CD4-positive, alpha-beta T cell (primary cell): ENCODE measurements at regions of chr4 and their contacts with region 1.

Region 1: GRCh38 chr4:153466081-153466948 is at the start of gene TMEM131L:
- DNase-seq: peak in 13 of 14 experiments; percentile 52 to 93 (median 69)
- ATAC-seq: peak; percentile 72
- H3K4me3 ChIP-seq: peak within 1 kb of the TSS; percentile 98
- H3K4me3 Mint-ChIP-seq: peak within 1 kb of the TSS; percentile 99
- H3K27ac ChIP-seq: peak within 1 kb of the TSS; percentile 87 to 89
- H3K27ac Mint-ChIP-seq: peak within 1 kb of the TSS; percentile 95
- H3K4me1 ChIP-seq: peaks cover 26% of the 10 kb centered on the region
- H3K4me1 Mint-ChIP-seq: peaks cover 52% of the 10 kb centered on the region
- H3K27me3 ChIP-seq: no peaks in the 10 kb centered on the region
- H3K27me3 Mint-ChIP-seq: no peaks in the 10 kb centered on the region
- CTCF ChIP-seq: peak; percentile 19
- total RNA-seq, gene TMEM131L: 101 to 106 TPM

Region 2: GRCh38 chr4:153426207-153426885 is 40.0 kb before region 1 on chr4:
- CTCF ChIA-PET with region 1: interaction called, 33 read pairs
- POLR2A ChIA-PET with region 1: interaction called, 90 read pairs
- intact Hi-C with region 1: loop called in 1 of 2 experiments (anchors 2 kb)
- DNase-seq: peak in 5 of 14 experiments; percentile 10 to 74 (median 68)
- ATAC-seq: peak; percentile 73
- H3K4me3 ChIP-seq: no peak overlapping the region
- H3K4me3 Mint-ChIP-seq: peak overlapping the region; percentile 50
- H3K27ac ChIP-seq: peak overlapping the region; percentile 58 to 61
- H3K27ac Mint-ChIP-seq: peak overlapping the region; percentile 96
- H3K4me1 ChIP-seq: peaks cover 44% of the 10 kb centered on the region
- H3K4me1 Mint-ChIP-seq: peaks cover 57% of the 10 kb centered on the region
- H3K27me3 ChIP-seq: no peaks in the 10 kb centered on the region
- H3K27me3 Mint-ChIP-seq: no peaks in the 10 kb centered on the region
- CTCF ChIP-seq: no peak

Region 3: DNA sequence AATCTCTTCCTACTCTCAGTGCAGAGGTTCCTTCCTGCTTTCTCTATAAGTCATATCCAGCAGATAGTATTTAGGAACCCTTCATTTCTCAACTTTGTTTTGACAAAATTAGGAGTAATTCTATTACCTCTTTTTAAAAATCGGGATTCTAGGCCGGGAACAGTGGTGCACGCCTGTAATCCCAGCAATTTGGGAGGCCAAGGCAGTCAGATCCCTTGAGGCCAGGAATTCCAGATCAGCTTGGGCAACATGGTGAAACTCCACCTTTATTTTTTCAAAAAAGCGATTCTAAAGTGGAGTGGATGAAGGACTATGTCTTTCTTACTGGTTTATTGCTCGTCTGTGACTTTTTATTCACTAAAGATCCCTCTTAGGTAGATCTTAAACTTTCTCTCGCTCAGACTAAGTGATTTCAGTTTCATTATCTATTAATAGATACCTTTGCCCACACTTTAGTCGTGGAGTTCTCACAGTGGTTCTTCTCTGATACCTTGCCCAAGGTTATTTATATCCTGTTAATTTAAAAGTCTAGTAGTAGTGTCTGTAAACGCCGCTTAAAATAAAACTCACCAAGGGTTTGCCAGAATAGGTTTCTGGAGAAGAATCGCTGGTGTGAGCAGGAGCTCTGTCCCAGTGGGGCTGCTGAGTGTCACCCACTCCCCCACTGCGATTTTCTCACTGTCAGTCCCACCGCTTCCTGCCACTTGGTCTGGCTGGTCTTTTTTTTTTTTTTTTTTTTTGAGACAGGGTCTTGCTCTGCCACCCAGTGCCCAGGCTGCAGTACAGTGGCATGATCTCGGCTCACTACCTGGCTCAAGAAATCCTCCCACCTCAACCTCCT is 27.2 kb before region 1 on chr4:
- CTCF ChIA-PET with region 1: interaction called, 33 read pairs
- POLR2A ChIA-PET with region 1: interaction called, 90 read pairs
- intact Hi-C with region 1: loop called in 1 of 2 experiments (anchors 2 kb)
- DNase-seq: peak in 10 of 14 experiments; percentile 15 to 84 (median 40)
- ATAC-seq: peak; percentile 83
- H3K4me3 ChIP-seq: peak overlapping the region; percentile 55
- H3K4me3 Mint-ChIP-seq: peak overlapping the region; percentile 75
- H3K27ac ChIP-seq: peak overlapping the region; percentile 68 to 84
- H3K27ac Mint-ChIP-seq: peak overlapping the region; percentile 89
- H3K4me1 ChIP-seq: peaks cover 23% of the 10 kb centered on the region
- H3K4me1 Mint-ChIP-seq: peaks cover 50% of the 10 kb centered on the region
- H3K27me3 ChIP-seq: no peaks in the 10 kb centered on the region
- H3K27me3 Mint-ChIP-seq: no peaks in the 10 kb centered on the region
- CTCF ChIP-seq: no peak

Region 4: DNA sequence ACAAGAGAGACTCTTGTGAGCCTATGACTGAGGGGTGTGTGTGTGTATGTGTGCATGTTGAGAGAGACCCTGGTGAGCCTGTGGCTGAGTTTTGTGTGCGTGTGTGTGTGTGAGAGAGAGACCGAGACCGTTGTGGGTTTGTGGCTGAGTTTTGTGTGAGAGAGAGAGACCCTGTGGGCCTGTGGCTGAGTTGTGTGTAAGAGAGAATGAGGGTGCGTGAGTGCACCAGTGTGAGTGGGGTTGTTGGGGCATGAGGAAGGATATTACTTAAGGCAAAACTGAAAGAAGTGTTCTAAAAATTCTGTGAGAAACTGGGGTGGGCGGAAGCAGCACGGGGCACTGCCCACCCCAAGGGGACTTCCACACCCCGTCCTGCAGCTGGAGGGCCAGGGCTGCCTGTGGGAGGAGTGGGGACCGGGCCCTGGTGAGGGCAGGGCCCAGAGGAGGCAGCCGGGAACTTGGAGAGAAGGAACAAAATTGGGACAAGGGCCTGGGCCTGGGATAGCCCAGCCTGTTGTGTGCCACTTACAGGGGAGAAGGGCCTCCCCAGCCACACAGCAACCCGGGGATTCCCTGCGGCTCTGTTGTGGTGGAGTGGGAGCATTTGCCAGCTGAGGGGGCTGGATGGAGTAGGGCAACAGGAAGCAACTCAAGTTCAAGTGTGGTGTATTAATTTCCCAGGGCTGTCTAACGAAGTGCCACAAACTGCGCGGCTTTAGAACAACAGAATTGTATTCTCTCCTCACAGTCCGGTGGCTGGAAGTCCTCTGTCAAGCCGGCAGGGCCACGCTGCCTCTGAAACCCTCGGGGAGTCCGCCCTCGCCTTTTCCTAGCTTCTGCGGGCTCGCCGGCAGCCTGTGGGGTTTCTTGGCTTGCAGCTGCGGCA is 21.9 kb after region 1 on chr4:
- CTCF ChIA-PET with region 1: interaction called, 8 read pairs
- POLR2A ChIA-PET with region 1: interaction called, 434 read pairs
- intact Hi-C with region 1: loop called in 1 of 2 experiments (anchors 1 kb)
- DNase-seq: peak in 13 of 14 experiments; percentile 50 to 94 (median 67)
- ATAC-seq: peak; percentile 65
- H3K4me3 ChIP-seq: peak overlapping the region; percentile 57
- H3K4me3 Mint-ChIP-seq: peak overlapping the region; percentile 88
- H3K27ac ChIP-seq: peak overlapping the region; percentile 92 to 94
- H3K27ac Mint-ChIP-seq: peak overlapping the region; percentile 92
- H3K4me1 ChIP-seq: peaks cover 68% of the 10 kb centered on the region
- H3K4me1 Mint-ChIP-seq: peaks cover 82% of the 10 kb centered on the region
- H3K27me3 ChIP-seq: no peaks in the 10 kb centered on the region
- H3K27me3 Mint-ChIP-seq: no peaks in the 10 kb centered on the region
- CTCF ChIP-seq: no peak

Region 5: DNA sequence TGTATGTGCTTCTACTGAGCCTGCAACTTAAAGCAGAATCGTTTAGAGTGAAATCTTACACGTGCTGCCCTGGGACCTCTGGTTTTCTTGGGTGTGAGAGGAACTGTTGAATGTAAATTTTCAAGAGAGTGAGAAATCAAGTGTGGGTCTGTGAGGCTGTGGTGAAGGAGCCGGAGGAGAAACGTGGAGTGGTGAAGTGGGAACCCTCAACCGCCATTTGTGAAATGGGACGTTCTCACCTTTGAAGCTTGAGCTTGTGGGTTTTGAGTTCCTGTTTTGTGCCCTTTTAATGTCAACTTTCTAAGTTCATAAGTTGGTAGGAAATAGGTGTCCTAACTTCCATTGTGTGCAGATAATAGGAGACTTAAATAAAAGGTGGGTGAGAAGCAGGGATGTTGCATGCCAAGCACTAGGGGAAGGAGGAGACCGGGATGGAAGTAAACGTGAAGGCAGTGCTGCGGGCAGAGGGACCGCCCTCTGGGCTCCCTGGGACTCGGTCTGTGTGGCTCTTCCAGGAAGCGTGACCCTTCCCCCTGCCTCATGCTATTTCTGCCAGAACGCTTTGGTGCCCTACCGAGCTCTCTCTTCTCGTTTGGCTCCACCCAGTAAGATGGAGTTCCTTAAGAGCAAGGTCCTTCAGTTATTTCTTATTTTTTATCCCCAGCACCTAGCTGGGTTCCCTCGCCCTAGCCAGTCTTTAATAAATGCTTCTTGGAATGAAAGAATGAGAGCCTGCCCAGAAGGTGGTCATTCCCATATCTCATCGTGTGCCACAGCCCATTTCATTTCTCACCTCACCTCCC is 55.9 kb after region 1 on chr4:
- CTCF ChIA-PET with region 1: interaction called, 8 read pairs
- POLR2A ChIA-PET with region 1: interaction called, 41 read pairs
- intact Hi-C with region 1: loop called (anchors 2 to 5 kb)
- DNase-seq: peak in 13 of 14 experiments; percentile 33 to 85 (median 55)
- ATAC-seq: peak; percentile 56
- H3K4me3 ChIP-seq: peak overlapping the region; percentile 28
- H3K4me3 Mint-ChIP-seq: peak overlapping the region; percentile 85
- H3K27ac ChIP-seq: peak overlapping the region; percentile 66 to 81
- H3K27ac Mint-ChIP-seq: peak overlapping the region; percentile 91
- H3K4me1 ChIP-seq: peaks cover 93% of the 10 kb centered on the region
- H3K4me1 Mint-ChIP-seq: peaks cover 94% of the 10 kb centered on the region
- H3K27me3 ChIP-seq: no peaks in the 10 kb centered on the region
- H3K27me3 Mint-ChIP-seq: no peaks in the 10 kb centered on the region
- CTCF ChIP-seq: no peak

Region 6: GRCh38 chr4:153535772-153536513 is 69.6 kb after region 1 on chr4:
- CTCF ChIA-PET with region 1: interaction called, 9 read pairs
- POLR2A ChIA-PET with region 1: interaction called, 21 read pairs
- intact Hi-C with region 1: no loop called
- DNase-seq: peak in 3 of 14 experiments; percentile 33 to 51 (median 45)
- ATAC-seq: peak; percentile 62
- H3K4me3 ChIP-seq: no peak overlapping the region
- H3K4me3 Mint-ChIP-seq: peak overlapping the region; percentile 82
- H3K27ac ChIP-seq: peak overlapping the region; percentile 52 to 64
- H3K27ac Mint-ChIP-seq: peak overlapping the region; percentile 91
- H3K4me1 ChIP-seq: peaks cover 68% of the 10 kb centered on the region
- H3K4me1 Mint-ChIP-seq: peaks cover 94% of the 10 kb centered on the region
- H3K27me3 ChIP-seq: no peaks in the 10 kb centered on the region
- H3K27me3 Mint-ChIP-seq: no peaks in the 10 kb centered on the region
- CTCF ChIP-seq: no peak